Naive thymus-derived CD8-positive, alpha-beta T cell (primary cell): ENCODE measurements at regions of chr16 and their contacts with region 1.

Region 1: GRCh38 chr16:29961479-29962343 is at the start of gene TMEM219:
- DNase-seq: peak; percentile 90 to 98 (median 96)
- ATAC-seq: peak; percentile 84 to 91
- H3K4me3 Mint-ChIP-seq: peak within 1 kb of the TSS; percentile 86 to 94 (median 89)
- H3K27ac Mint-ChIP-seq: peak within 1 kb of the TSS; percentile 77 to 97 (median 93)
- H3K4me1 Mint-ChIP-seq: peaks cover 12 to 29% (median 27%) of the 10 kb centered on the region in 4 donors
- H3K27me3 Mint-ChIP-seq: no peaks in the 10 kb centered on the region
- polyA plus RNA-seq, gene TMEM219: 157 to 179 (median 174) TPM

Region 2: GRCh38 chr16:29862884-29863668 is 98.6 kb before region 1 on chr16 and contains the start of gene CDIPT:
- POLR2A ChIA-PET with region 1: interaction called, 10 read pairs
- DNase-seq: peak; percentile 79 to 97 (median 93)
- ATAC-seq: peak; percentile 96 to 99
- H3K4me3 Mint-ChIP-seq: peak within 1 kb of the TSS; percentile 92 to 97 (median 95)
- H3K27ac Mint-ChIP-seq: peak within 1 kb of the TSS; percentile 97 to 100 (median 99)
- H3K4me1 Mint-ChIP-seq: peaks cover 7 to 38% (median 31%) of the 10 kb centered on the region in 4 donors
- H3K27me3 Mint-ChIP-seq: no peaks in the 10 kb centered on the region
- polyA plus RNA-seq, gene CDIPT: 79.6 to 95.7 (median 91.3) TPM

Region 3: DNA sequence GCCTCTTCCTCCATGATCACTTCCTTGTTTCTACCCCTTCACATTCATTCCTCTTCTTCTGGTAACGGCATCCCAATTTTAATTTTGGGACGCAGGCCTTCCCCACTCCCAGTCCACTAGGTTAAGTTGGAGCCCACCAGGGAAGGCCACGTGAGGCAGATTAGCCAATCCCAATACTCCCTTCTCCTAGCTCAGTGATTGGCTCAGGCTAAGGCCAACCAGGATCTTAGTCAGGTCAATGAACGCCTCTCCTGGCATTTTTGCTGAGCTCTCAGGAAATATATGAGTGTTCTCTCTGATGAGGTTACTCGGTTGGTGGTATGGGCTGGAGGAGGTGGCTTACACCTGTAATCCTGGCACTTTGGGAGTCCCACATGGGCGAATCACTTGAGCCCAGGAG is 77.7 kb before region 1 on chr16:
- POLR2A ChIA-PET with region 1: no interaction called
- DNase-seq: no peak
- ATAC-seq: no peak
- H3K4me3 Mint-ChIP-seq: no peak overlapping the region
- H3K27ac Mint-ChIP-seq: no peak overlapping the region
- H3K4me1 Mint-ChIP-seq: no peaks in the 10 kb centered on the region
- H3K27me3 Mint-ChIP-seq: peaks cover 4 to 28% (median 22%) of the 10 kb centered on the region in 5 donors

Region 4: GRCh38 chr16:29973384-29974246 is 11.9 kb after region 1 on chr16 and contains the start of gene TAOK2:
- POLR2A ChIA-PET with region 1: interaction called, 43 read pairs
- DNase-seq: peak; percentile 82 to 97 (median 92)
- ATAC-seq: peak; percentile 88 to 96
- H3K4me3 Mint-ChIP-seq: peak within 1 kb of the TSS; percentile 82 to 98 (median 95)
- H3K27ac Mint-ChIP-seq: peak within 1 kb of the TSS; percentile 66 to 96 (median 91)
- H3K4me1 Mint-ChIP-seq: peaks cover 19 to 43% (median 40%) of the 10 kb centered on the region in 4 donors
- H3K27me3 Mint-ChIP-seq: no peaks in the 10 kb centered on the region
- polyA plus RNA-seq, gene TAOK2: 2.6 to 6.6 (median 2.8) TPM